ENCODE measurements at regions of chr7 and their contacts with region 1.

Region 1: DNA sequence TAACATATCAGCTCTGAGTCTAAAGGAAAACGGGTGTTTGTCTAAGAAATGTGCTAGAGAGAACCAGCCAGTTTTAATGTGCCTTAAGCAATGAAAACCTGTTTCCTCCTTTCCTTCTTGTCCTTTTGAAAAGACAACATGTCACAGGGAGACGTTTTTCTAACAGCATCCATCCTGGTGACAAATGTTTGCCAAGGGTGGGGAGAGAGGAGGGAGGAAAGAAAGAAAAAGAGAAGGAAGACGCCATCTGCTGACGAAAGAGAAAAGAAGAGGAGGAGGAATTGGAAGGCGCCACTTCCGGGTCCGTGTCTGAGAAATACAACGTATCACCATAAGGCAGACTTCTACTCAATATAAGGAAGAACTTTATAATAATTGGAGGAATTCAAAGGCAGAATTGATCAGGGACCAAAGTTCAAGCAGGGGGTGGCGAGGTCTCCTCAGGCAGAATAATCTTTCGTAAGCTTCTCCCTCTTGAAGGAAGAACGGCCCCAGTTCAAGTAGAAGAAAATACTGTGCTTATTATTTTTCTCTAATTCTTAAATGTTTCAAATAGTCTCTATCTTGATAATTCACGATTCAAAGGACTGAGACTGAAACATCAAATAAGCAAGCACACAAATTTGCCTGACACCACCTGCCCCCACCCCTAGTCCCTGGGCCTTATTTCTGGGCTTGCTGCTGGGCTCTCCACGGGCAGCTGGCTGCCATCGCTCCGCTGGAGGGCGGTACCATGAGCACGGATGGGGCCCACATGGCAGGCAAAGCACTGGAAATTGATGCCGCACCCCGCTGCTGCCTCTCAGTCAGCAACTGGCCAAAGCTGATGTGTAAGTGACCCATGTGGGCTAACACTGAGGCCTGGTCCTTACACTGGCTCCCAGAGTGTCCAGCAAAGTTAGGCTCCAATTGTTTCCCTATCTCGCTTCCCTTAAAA is 273.7 kb upstream of the KLF14 start:
- DNase-seq: peak; percentile 82
- ATAC-seq: peak; percentile 70
- H3K4me3 Mint-ChIP-seq: peak overlapping the region; percentile 69
- H3K27ac Mint-ChIP-seq: peak overlapping the region; percentile 94
- H3K4me1 Mint-ChIP-seq: peaks cover 63% of the 10 kb centered on the region
- H3K27me3 Mint-ChIP-seq: no peaks in the 10 kb centered on the region

Region 2: GRCh38 chr7:130865408-130866236 is 142.0 kb before region 1 on chr7:
- CTCF ChIA-PET with region 1: no interaction called
- POLR2A ChIA-PET with region 1: no interaction called
- DNase-seq: peak; percentile 48
- ATAC-seq: no peak
- H3K4me3 Mint-ChIP-seq: no peak overlapping the region
- H3K27ac Mint-ChIP-seq: no peak overlapping the region
- H3K4me1 Mint-ChIP-seq: no peaks in the 10 kb centered on the region
- H3K27me3 Mint-ChIP-seq: no peaks in the 10 kb centered on the region

Region 3: DNA sequence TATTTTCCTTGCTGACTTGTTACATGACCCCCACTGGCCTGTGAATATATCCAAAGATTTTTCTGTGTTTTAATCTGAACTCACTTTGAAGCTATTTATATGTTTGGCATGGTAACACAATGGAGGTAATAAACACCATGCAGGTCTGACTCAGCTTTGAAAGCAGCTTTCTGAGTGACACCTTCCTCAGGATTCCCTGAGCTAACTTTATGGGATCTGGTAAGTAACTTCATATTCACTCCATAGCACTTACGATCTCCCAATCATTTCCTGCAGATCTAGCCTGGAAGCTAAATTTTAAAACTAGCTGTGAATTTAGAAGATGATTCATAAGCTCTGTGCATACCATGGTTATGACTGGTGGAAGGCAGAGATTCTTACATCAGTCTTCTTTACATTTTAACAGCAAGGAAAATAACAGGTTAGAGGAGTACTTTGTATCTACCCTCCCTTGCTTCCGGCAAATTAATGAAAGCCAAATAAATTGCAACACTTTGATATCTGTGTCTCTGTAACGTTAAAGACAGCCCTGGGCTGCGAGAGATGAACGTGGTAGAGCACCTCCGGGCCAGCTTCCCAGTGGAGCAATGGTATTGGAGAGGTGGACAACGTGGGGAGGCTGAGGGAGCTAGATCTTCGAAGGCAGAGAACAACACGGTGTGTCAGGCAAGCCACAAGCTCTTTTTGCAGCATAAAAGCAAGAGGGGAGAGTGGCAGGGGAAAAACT is 103.5 kb before region 1 on chr7:
- CTCF ChIA-PET with region 1: interaction called, 10 read pairs
- POLR2A ChIA-PET with region 1: no interaction called
- DNase-seq: no peak
- ATAC-seq: no peak
- H3K4me3 Mint-ChIP-seq: no peak overlapping the region
- H3K27ac Mint-ChIP-seq: peak overlapping the region; percentile 69
- H3K4me1 Mint-ChIP-seq: peaks cover 73% of the 10 kb centered on the region
- H3K27me3 Mint-ChIP-seq: no peaks in the 10 kb centered on the region

Region 4: DNA sequence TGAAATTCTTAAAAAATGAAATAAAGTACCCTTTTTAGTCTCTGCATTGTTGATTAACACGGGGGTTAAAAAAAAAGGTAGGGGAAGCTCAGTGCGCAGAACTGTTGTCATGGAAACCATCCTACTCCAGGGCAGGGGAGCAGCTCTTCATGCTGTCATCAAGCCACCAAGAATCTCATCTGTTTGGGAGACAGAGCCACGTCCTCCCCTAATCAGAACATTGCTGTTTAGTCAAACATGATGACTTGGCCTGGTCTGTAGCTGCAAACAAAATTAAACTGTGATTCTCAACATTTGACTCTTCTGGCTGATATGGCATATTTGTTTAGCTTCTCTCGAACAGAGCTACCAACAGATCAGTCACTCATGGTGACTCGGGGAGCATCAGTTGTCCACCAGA is 19.2 kb before region 1 on chr7:
- CTCF ChIA-PET with region 1: interaction called, 55 read pairs
- POLR2A ChIA-PET with region 1: interaction called, 5 read pairs
- DNase-seq: no peak
- ATAC-seq: peak; percentile 43
- H3K4me3 Mint-ChIP-seq: no peak overlapping the region
- H3K27ac Mint-ChIP-seq: peak overlapping the region; percentile 28
- H3K4me1 Mint-ChIP-seq: peaks cover 51% of the 10 kb centered on the region
- H3K27me3 Mint-ChIP-seq: no peaks in the 10 kb centered on the region

Region 5: DNA sequence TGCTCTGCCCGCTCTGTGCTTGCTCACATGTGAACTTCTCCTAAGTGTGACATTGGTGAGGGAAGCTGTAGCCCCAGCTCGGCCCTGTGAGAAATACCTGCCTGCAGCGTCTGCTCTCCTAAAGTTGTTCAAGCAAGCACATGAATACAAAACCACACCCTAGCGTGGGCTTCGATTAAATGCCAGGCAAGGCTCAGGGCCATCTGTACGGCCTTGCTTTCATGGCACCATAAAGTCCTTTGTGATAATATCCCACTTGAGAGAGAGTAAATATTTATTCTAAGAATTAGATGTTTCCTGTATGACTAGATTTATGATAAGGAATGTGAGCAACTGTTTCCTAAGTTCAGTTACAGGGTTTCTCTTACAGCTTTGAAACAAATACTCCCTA is 10.8 kb before region 1 on chr7:
- CTCF ChIA-PET with region 1: interaction called, 31 read pairs
- POLR2A ChIA-PET with region 1: no interaction called
- DNase-seq: peak; percentile 9
- ATAC-seq: peak; percentile 43
- H3K4me3 Mint-ChIP-seq: no peak overlapping the region
- H3K27ac Mint-ChIP-seq: peak overlapping the region; percentile 53
- H3K4me1 Mint-ChIP-seq: peaks cover 38% of the 10 kb centered on the region
- H3K27me3 Mint-ChIP-seq: no peaks in the 10 kb centered on the region

Region 6: DNA sequence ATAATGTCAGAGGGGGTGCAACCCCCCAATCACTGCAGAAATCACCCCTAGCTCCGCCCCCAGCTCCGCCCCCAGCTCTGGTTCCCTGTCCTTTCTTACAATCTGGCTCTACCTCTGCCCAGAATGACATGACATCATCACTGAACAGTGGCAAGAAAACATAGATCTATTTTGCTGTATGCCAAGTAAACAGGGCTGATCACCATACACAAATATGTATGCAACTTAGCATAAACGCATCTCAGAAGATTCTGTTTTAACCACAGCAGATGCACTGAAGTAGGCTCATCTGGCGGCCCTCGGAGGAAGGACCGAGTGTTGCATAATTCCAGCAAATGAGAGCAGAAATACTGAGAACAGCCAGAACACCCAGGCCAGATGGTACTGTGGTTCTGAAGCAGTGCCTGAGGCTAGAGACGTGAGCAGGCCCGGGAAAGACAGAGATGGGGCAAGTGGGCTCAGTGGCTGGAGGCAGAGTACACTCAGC is 19.7 kb after region 1 on chr7:
- CTCF ChIA-PET with region 1: interaction called, 14 read pairs
- POLR2A ChIA-PET with region 1: interaction called, 4 read pairs
- DNase-seq: no peak
- ATAC-seq: peak; percentile 42
- H3K4me3 Mint-ChIP-seq: no peak overlapping the region
- H3K27ac Mint-ChIP-seq: peak overlapping the region; percentile 22
- H3K4me1 Mint-ChIP-seq: peaks cover 57% of the 10 kb centered on the region
- H3K27me3 Mint-ChIP-seq: no peaks in the 10 kb centered on the region

Region 7: GRCh38 chr7:131196803-131197202 is 189.1 kb after region 1 on chr7:
- CTCF ChIA-PET with region 1: no interaction called
- POLR2A ChIA-PET with region 1: no interaction called
- DNase-seq: peak; percentile 17
- ATAC-seq: no peak
- H3K4me3 Mint-ChIP-seq: no peak overlapping the region
- H3K27ac Mint-ChIP-seq: no peak overlapping the region
- H3K4me1 Mint-ChIP-seq: peaks cover 9% of the 10 kb centered on the region
- H3K27me3 Mint-ChIP-seq: peaks cover 2% of the 10 kb centered on the region